Right lobe of liver (tissue), 6 donors: ENCODE measurements at regions of chr1 and their contacts with region 1.

Region 1: GRCh38 chr1:175129997-175130648 is 62.5 kb downstream of the KIAA0040 start:
- DNase-seq: no peak
- ATAC-seq: peak in 1 of 4 donors; percentile 17
- H3K4me3 ChIP-seq: no peak overlapping the region
- H3K27ac ChIP-seq: peak overlapping the region in 2 of 3 donors; percentile 29 to 30
- H3K4me1 ChIP-seq: peaks cover 0 to 34% (median 3%) of the 10 kb centered on the region in 4 donors
- H3K27me3 ChIP-seq: no peaks in the 10 kb centered on the region
- CTCF ChIP-seq: no peak
- POLR2A ChIP-seq: no peak

Region 2: GRCh38 chr1:175035865-175036264 is 94.3 kb before region 1 on chr1:
- intact Hi-C with region 1: loop called in 1 of 2 experiments (anchors 10 kb)
- DNase-seq: no peak
- ATAC-seq: no peak
- H3K4me3 ChIP-seq: no peak overlapping the region
- H3K27ac ChIP-seq: no peak overlapping the region
- H3K4me1 ChIP-seq: no peaks in the 10 kb centered on the region
- H3K27me3 ChIP-seq: no peaks in the 10 kb centered on the region
- CTCF ChIP-seq: no peak
- POLR2A ChIP-seq: no peak

Region 3: DNA sequence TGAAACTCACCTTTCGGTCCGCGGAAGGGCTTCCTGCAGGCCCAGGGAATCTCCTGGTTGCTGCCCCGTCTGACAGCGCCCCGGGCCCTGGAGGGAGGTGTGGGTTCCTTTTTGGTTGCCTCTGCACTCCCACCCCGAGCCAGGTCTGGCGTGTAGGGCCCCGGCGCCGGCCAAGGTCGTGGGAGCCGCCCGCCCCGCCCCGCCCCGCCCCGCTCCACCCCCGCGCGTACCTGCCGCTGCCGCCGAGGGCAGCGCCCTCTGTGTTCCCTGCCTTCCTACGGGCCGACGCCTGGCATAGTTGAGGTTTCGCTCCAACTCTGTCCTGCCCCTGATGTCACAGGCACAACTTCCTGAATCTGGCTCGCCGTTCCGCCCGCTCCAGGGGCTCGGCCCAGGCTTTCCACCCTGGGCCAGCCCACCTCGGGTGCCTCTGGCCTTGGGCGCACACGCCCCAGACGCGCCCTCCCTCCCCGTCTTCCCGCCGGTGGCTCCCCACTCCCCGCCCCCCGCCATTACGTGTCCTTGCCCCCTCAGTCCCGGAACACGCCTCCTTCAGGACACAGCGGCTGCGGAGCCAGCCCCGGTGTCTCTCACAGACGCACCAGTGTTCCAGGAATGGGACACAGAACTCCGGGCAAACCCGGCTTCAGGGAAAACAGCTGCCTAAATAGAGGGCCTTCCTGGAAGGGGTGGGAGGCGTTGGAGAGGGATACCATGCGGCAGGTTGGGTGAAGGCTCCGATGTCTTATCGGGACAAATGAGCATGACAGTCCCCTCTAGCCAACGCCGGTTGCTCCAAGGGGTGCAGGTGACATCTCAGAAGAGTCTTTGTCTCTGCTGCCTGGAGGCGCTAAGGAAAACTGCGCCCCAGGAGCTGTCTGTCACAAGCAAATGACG is 62.8 kb after region 1 on chr1 and contains the start of gene KIAA0040:
- intact Hi-C with region 1: no loop called
- DNase-seq: peak; percentile 86 to 87 (median 86)
- ATAC-seq: peak; percentile 88 to 95 (median 91)
- H3K4me3 ChIP-seq: peak within 1 kb of the TSS; percentile 60 to 83 (median 64)
- H3K27ac ChIP-seq: peak within 1 kb of the TSS; percentile 86 to 94 (median 89)
- H3K4me1 ChIP-seq: peaks cover 0 to 11% (median 4%) of the 10 kb centered on the region in 4 donors
- H3K27me3 ChIP-seq: no peaks in the 10 kb centered on the region
- CTCF ChIP-seq: peak in 3 of 4 donors; percentile 6 to 28 (median 21)
- POLR2A ChIP-seq: peak; percentile 46
- total RNA-seq, gene KIAA0040: 4.6 to 13.5 (median 5.3) TPM